Panc1 (cell line): ENCODE measurements at regions of chr4 and their contacts with region 1.

Region 1: GRCh38 chr4:26793735-26794134 is 66.9 kb upstream of the STIM2 start:
- DNase-seq: no peak
- ATAC-seq: no peak
- H3K4me3 ChIP-seq: no peak overlapping the region
- H3K27ac ChIP-seq: no peak overlapping the region
- H3K4me1 ChIP-seq: no peaks in the 10 kb centered on the region
- H3K27me3 ChIP-seq: no peaks in the 10 kb centered on the region
- CTCF ChIP-seq: no peak

Region 2: GRCh38 chr4:26670903-26671537 is 122.7 kb before region 1 on chr4:
- CTCF ChIA-PET with region 1: no interaction called
- POLR2A ChIA-PET with region 1: interaction called, 11 read pairs
- in situ Hi-C with region 1: no loop called
- intact Hi-C with region 1: no loop called
- DNase-seq: no peak
- ATAC-seq: no peak
- H3K4me3 ChIP-seq: no peak overlapping the region
- H3K27ac ChIP-seq: no peak overlapping the region
- H3K4me1 ChIP-seq: no peaks in the 10 kb centered on the region
- H3K27me3 ChIP-seq: no peaks in the 10 kb centered on the region
- CTCF ChIP-seq: no peak